IMR-90 (cell line): ENCODE measurements at regions of chr3 and their contacts with region 1.

Region 1: DNA sequence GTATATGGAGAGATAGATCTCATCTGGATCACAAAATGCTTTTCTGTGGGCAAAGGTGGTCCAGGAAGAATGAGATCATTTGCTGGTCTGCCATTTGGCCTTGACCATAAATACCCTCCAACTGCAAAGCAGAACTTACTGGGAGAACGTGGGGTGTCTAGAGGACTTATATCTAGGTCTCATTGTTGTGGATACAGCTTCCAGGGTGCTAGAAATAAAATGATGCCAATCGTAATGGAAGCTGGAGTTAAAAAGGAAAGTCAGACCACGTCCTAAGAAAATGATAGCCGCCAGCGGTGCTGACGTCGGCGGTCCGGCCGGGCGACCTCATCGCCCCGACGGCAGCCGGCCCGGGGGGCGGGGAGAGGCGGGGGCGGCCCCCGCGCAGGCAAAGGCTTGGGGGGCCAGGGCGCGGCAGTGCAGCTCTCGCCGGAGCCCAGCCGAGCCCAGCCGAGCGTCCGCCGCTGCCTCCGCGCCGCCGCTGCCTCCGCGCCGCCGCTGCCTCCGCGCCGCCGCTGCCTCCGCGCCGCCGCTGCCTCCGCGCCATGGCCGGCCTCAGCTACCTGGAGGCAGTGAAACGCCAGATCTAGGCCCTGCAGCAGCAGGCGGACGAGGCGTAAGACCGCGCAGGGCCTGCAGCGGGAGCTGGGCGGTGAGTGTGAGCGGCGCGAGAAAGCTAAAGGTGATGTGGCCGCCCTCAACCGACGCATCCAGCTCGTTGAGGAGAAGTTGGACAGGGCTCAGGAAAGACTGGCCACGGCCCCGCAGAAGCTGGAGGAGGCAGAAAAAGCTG is 89.5 kb downstream of the EOMES start:
- DNase-seq: peak; percentile 55
- ATAC-seq: peak; percentile 80
- H3K4me3 ChIP-seq: peak overlapping the region; percentile 58
- H3K27ac ChIP-seq: peak overlapping the region; percentile 93
- H3K4me1 ChIP-seq: no peaks in the 10 kb centered on the region; the same call in 1 of the 2 replicates
- H3K27me3 ChIP-seq: no peaks in the 10 kb centered on the region
- CTCF ChIP-seq: no peak
- POLR2A ChIP-seq: no peak
- RAD21 ChIP-seq: no peak

Region 2: GRCh38 chr3:27578032-27578431 is 54.6 kb before region 1 on chr3:
- CTCF ChIA-PET with region 1: interaction called, 10 read pairs
- POLR2A ChIA-PET with region 1: no interaction called
- dilution Hi-C with region 1: no loop called
- in situ Hi-C with region 1: no loop called
- intact Hi-C with region 1: no loop called
- DNase-seq: peak; percentile 60
- ATAC-seq: peak; percentile 48; the same call in 1 of the 2 replicates
- H3K4me3 ChIP-seq: no peak overlapping the region
- H3K27ac ChIP-seq: no peak overlapping the region
- H3K4me1 ChIP-seq: no peaks in the 10 kb centered on the region; the same call in 1 of the 2 replicates
- H3K27me3 ChIP-seq: no peaks in the 10 kb centered on the region
- CTCF ChIP-seq: no peak
- POLR2A ChIP-seq: no peak
- RAD21 ChIP-seq: no peak